CD4-positive, alpha-beta T cell (primary cell): ENCODE measurements at regions of chr1 and their contacts with region 1.

Region 1: DNA sequence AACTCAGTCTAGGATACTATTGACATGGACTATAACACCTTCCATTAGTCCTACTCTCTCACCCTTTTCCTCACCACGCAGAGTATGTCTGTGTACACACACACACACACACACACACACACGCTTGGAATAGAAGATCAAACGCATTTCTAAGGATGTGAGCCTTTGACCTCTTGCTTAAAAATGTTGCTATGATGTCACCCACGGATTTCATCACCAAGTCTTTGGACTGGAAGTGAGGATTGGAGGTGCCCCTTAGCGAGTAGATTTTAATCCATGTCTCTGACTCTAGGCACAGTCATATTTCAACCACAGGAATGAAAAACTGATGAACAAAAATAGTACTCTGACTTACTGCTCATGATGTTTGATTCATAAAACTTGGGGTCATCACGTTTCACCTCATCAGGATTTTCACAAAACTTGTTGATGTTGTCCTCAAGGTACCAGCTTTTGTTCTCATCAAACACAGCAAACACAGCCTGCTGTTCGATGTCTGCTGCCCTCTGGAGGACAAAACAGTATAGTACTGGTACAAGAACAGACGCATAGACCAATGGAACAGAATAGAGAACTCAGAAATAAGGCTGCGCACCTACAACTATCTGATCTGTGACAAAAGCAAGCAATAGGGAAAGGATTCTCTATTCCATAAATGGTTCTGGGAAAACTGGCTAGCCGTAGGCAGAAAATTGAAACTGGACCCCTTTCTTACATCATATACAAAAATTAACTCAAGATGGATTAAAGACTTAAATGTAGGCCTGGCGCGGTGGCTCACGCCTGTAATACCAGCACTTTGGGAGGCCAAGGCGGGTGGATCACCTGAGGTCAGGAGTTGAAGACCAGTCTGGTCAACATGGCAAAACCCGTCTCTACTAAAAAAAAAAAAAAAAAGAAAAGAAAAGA is 39.9 kb downstream of the F5 start:
- DNase-seq: peak; percentile 22 to 86 (median 33)
- ATAC-seq: peak; percentile 89
- H3K4me3 ChIP-seq: no peak overlapping the region
- H3K4me3 Mint-ChIP-seq: no peak overlapping the region
- H3K27ac ChIP-seq: no peak overlapping the region
- H3K27ac Mint-ChIP-seq: no peak overlapping the region
- H3K4me1 ChIP-seq: no peaks in the 10 kb centered on the region
- H3K4me1 Mint-ChIP-seq: peaks cover 4% of the 10 kb centered on the region
- H3K27me3 ChIP-seq: no peaks in the 10 kb centered on the region
- H3K27me3 Mint-ChIP-seq: no peaks in the 10 kb centered on the region
- CTCF ChIP-seq: peak; percentile 82

Region 2: GRCh38 chr1:168603501-168604110 is 942.7 kb before region 1 on chr1:
- CTCF ChIA-PET with region 1: interaction called, 4 read pairs
- POLR2A ChIA-PET with region 1: no interaction called
- intact Hi-C with region 1: loop called (anchors 1 to 2 kb)
- DNase-seq: peak; percentile 48 to 81 (median 59)
- ATAC-seq: peak; percentile 82
- H3K4me3 ChIP-seq: no peak overlapping the region
- H3K4me3 Mint-ChIP-seq: no peak overlapping the region
- H3K27ac ChIP-seq: no peak overlapping the region
- H3K27ac Mint-ChIP-seq: no peak overlapping the region
- H3K4me1 ChIP-seq: no peaks in the 10 kb centered on the region
- H3K4me1 Mint-ChIP-seq: no peaks in the 10 kb centered on the region
- H3K27me3 ChIP-seq: no peaks in the 10 kb centered on the region
- H3K27me3 Mint-ChIP-seq: peaks cover 4% of the 10 kb centered on the region
- CTCF ChIP-seq: peak; percentile 68

Region 3: GRCh38 chr1:169466259-169467230 is 79.8 kb before region 1 on chr1:
- CTCF ChIA-PET with region 1: no interaction called
- POLR2A ChIA-PET with region 1: no interaction called
- intact Hi-C with region 1: loop called (anchors 2 to 5 kb)
- DNase-seq: peak in 5 of 14 experiments; percentile 10 to 53 (median 38)
- ATAC-seq: no peak
- H3K4me3 ChIP-seq: no peak overlapping the region
- H3K4me3 Mint-ChIP-seq: no peak overlapping the region
- H3K27ac ChIP-seq: no peak overlapping the region
- H3K27ac Mint-ChIP-seq: no peak overlapping the region
- H3K4me1 ChIP-seq: no peaks in the 10 kb centered on the region
- H3K4me1 Mint-ChIP-seq: peaks cover 4% of the 10 kb centered on the region
- H3K27me3 ChIP-seq: no peaks in the 10 kb centered on the region
- H3K27me3 Mint-ChIP-seq: no peaks in the 10 kb centered on the region
- CTCF ChIP-seq: peak; percentile 62

Region 4: DNA sequence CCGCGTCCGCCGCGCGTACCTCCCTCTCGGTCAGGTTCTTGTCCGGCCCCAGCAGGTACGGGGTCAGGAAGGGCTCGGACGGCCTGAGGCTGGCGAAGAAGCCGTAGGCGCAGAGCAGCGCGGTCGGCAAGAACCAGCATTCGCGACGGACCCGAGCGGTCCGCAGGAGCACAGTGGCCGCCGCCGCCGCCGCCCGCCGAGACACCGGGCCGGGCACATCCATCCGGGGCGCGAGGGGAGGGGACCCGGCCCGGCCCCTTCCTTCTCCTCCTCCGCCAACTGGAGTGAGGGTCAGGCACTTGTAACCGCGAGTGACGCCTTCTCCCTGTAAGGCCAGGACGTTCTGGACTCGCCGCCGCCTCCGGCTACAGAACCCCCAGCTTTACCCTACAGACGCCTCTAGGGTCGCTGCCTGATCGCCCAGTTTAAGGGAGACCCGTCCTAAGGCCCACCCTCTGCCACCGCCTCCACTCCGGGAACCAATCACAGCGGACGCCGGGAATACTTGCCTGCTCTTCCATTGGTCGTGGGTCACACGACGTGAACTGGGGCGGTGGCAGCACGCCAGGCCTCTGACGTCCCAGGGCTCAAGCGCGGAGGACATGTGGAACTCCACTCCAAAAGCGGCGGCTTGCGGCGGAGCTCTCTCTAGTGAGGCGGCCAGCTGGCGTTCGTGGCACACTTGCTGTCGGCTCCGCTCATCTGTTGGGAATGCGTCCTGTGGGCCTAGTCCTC is 60.6 kb before region 1 on chr1 and contains the start of gene SLC19A2:
- CTCF ChIA-PET with region 1: interaction called, 3 read pairs
- POLR2A ChIA-PET with region 1: interaction called, 3 read pairs
- intact Hi-C with region 1: loop called in 1 of 2 experiments (anchors 5 kb)
- DNase-seq: peak; percentile 82 to 97 (median 90)
- ATAC-seq: peak; percentile 99
- H3K4me3 ChIP-seq: peak within 1 kb of the TSS; percentile 73
- H3K4me3 Mint-ChIP-seq: peak within 1 kb of the TSS; percentile 98
- H3K27ac ChIP-seq: peak within 1 kb of the TSS; percentile 54 to 65
- H3K27ac Mint-ChIP-seq: peak within 1 kb of the TSS; percentile 92
- H3K4me1 ChIP-seq: peaks cover 20% of the 10 kb centered on the region
- H3K4me1 Mint-ChIP-seq: peaks cover 48% of the 10 kb centered on the region
- H3K27me3 ChIP-seq: no peaks in the 10 kb centered on the region
- H3K27me3 Mint-ChIP-seq: no peaks in the 10 kb centered on the region
- CTCF ChIP-seq: peak; percentile 44
- total RNA-seq, gene SLC19A2: 3.6 to 3.7 TPM

Region 5: DNA sequence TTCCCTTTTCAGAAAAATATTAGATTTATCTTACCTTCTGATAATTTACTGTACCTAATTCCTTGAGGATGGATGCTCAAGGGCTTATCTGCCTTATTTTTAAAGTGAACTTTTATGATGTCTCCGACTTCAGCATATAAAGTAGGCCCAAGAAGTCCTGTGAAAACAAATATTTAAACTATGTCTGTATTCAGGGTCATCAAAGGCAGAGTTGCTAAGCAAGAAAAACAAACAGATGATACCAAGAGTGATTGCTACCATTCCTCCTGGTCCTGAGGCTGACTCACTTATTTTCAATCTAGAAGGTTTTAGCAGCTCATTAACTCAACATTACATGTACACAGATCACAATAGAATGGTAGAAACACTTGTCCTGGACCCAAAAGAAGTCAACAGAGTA is 25.8 kb after region 1 on chr1:
- CTCF ChIA-PET with region 1: no interaction called
- POLR2A ChIA-PET with region 1: no interaction called
- intact Hi-C with region 1: no loop called
- DNase-seq: peak in 3 of 14 experiments; percentile 22 to 47 (median 24)
- ATAC-seq: peak; percentile 64
- H3K4me3 ChIP-seq: no peak overlapping the region
- H3K4me3 Mint-ChIP-seq: no peak overlapping the region
- H3K27ac ChIP-seq: no peak overlapping the region
- H3K27ac Mint-ChIP-seq: peak overlapping the region; percentile 57
- H3K4me1 ChIP-seq: peaks cover 5% of the 10 kb centered on the region
- H3K4me1 Mint-ChIP-seq: peaks cover 17% of the 10 kb centered on the region
- H3K27me3 ChIP-seq: no peaks in the 10 kb centered on the region
- H3K27me3 Mint-ChIP-seq: no peaks in the 10 kb centered on the region
- CTCF ChIP-seq: no peak

Region 6: DNA sequence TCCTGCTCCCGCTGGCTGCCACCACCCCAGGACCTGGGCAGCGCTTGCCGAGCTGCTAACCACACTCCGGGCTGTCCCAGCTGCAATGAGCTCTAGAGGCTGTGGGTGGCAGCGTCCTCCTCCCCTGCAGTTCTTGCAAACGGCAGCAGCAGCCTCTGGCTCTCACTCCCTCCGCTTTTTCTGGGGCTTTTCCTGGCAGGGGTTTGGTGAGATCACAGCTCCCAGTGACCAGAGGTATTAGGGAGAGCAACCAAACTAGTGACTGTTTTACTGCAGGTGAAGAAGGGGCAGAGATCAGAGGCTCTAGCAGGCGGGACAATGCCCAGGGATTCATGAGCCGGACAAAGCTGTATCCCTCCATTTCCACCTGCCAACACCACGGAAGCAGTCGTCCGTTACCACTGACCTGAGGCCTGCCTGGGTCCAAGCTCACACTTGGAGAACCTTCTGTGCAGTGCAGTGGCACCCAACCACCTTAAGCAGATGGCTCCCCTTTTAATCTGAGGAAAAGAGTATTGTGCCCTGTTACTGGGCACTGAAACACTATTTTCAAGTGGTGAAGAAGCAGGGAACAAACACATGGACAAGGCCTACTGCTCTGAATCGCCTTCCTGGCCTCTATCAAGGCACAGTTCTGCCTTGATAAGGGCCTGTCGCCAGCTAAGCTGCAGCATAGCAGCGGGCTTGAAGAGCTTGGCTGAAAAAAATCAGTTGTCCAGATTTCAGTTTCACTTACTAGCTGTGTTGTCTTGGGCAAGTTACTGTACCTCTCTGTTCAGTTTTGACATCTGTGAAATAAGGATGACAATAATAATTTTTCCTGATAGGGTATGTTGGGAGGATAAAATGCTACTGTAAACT is 40.3 kb after region 1 on chr1 and contains the start of gene F5:
- CTCF ChIA-PET with region 1: no interaction called
- POLR2A ChIA-PET with region 1: no interaction called
- intact Hi-C with region 1: loop called (anchors 5 kb)
- DNase-seq: peak; percentile 65 to 88 (median 72)
- ATAC-seq: peak; percentile 99
- H3K4me3 ChIP-seq: peak within 1 kb of the TSS; percentile 64
- H3K4me3 Mint-ChIP-seq: peak within 1 kb of the TSS; percentile 91
- H3K27ac ChIP-seq: no peak within 1 kb of the TSS
- H3K27ac Mint-ChIP-seq: peak within 1 kb of the TSS; percentile 71
- H3K4me1 ChIP-seq: peaks cover 19% of the 10 kb centered on the region
- H3K4me1 Mint-ChIP-seq: peaks cover 53% of the 10 kb centered on the region
- H3K27me3 ChIP-seq: no peaks in the 10 kb centered on the region
- H3K27me3 Mint-ChIP-seq: no peaks in the 10 kb centered on the region
- CTCF ChIP-seq: peak; percentile 71
- total RNA-seq, gene F5: 5.4 to 6.2 TPM

Region 7: GRCh38 chr1:169601093-169601881 is 54.9 kb after region 1 on chr1:
- CTCF ChIA-PET with region 1: interaction called, 3 read pairs
- POLR2A ChIA-PET with region 1: no interaction called
- intact Hi-C with region 1: loop called in 1 of 2 experiments (anchors 2 kb)
- DNase-seq: peak in 3 of 14 experiments; percentile 49 to 59 (median 57)
- ATAC-seq: no peak
- H3K4me3 ChIP-seq: no peak overlapping the region
- H3K4me3 Mint-ChIP-seq: peak overlapping the region; percentile 7
- H3K27ac ChIP-seq: peak overlapping the region in 1 of 2 donors; percentile 9
- H3K27ac Mint-ChIP-seq: peak overlapping the region; percentile 77
- H3K4me1 ChIP-seq: peaks cover 40% of the 10 kb centered on the region
- H3K4me1 Mint-ChIP-seq: peaks cover 55% of the 10 kb centered on the region
- H3K27me3 ChIP-seq: no peaks in the 10 kb centered on the region
- H3K27me3 Mint-ChIP-seq: no peaks in the 10 kb centered on the region
- CTCF ChIP-seq: peak; percentile 84

Region 8: GRCh38 chr1:170296642-170297041 is 750.3 kb after region 1 on chr1:
- CTCF ChIA-PET with region 1: no interaction called
- POLR2A ChIA-PET with region 1: no interaction called
- intact Hi-C with region 1: no loop called
- DNase-seq: no peak
- ATAC-seq: no peak
- H3K4me3 ChIP-seq: no peak overlapping the region
- H3K4me3 Mint-ChIP-seq: no peak overlapping the region
- H3K27ac ChIP-seq: no peak overlapping the region
- H3K27ac Mint-ChIP-seq: no peak overlapping the region
- H3K4me1 ChIP-seq: no peaks in the 10 kb centered on the region
- H3K4me1 Mint-ChIP-seq: no peaks in the 10 kb centered on the region
- H3K27me3 ChIP-seq: no peaks in the 10 kb centered on the region
- H3K27me3 Mint-ChIP-seq: peaks cover 4% of the 10 kb centered on the region
- CTCF ChIP-seq: no peak